ENCODE measurements at regions of chr6 and their contacts with region 1.

Region 1: DNA sequence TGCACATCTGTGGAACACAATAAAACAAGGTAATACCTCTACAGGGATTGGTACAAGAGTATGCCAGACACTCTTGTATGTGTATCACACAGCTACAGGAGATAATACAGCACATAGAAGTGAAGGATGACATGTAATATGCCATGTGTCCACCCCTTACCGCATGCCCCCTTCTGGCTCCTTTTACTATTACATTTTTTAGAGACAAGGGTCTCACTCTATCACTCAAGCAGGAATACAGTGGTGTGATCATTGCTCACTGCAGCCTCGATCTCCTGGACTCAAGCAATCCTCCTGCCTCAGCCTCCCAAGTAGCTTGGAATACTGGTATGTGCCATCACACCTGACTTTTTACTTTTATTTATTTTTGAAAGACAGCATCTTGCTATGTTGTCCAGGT is 4.2 kb upstream of the NCR3 start:
- DNase-seq: peak; percentile 63
- H3K4me3 Mint-ChIP-seq: no peak overlapping the region
- H3K27ac Mint-ChIP-seq: peak overlapping the region; percentile 12
- H3K4me1 Mint-ChIP-seq: peaks cover 65% of the 10 kb centered on the region
- H3K27me3 Mint-ChIP-seq: no peaks in the 10 kb centered on the region

Region 2: DNA sequence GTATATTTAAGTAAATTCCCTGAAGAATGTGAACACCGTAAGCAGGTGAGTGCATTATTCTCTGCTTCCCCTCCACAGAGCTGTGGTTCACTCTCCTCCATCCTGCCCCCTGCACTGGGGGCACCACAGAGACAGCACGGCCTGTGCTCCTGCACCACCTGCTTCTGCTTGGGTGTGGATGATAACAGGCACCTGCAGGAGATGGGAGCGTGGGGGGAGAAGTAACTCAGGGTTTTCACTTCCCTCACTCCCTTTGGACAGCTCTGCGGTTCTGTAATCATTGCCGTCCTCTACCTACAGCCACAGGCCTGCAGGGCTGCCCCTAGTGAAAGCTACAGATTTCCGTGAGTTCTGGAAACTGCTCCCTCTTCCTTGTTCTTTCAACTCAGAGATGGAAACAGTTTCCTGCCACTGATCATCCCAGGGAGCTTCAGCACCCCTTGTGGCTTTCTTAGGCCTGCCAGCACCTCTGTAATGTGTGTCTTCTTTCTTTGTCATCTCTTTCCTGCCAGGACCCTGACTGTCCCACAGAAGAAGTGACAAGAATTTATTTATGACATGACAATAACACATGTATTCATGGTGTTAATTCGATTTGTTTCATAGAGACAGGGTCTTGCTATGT is 120.4 kb before region 1 on chr6:
- CTCF ChIA-PET with region 1: no interaction called
- DNase-seq: no peak
- H3K4me3 Mint-ChIP-seq: no peak overlapping the region
- H3K27ac Mint-ChIP-seq: no peak overlapping the region
- H3K4me1 Mint-ChIP-seq: peaks cover 8% of the 10 kb centered on the region
- H3K27me3 Mint-ChIP-seq: peaks cover 3% of the 10 kb centered on the region

Region 3: DNA sequence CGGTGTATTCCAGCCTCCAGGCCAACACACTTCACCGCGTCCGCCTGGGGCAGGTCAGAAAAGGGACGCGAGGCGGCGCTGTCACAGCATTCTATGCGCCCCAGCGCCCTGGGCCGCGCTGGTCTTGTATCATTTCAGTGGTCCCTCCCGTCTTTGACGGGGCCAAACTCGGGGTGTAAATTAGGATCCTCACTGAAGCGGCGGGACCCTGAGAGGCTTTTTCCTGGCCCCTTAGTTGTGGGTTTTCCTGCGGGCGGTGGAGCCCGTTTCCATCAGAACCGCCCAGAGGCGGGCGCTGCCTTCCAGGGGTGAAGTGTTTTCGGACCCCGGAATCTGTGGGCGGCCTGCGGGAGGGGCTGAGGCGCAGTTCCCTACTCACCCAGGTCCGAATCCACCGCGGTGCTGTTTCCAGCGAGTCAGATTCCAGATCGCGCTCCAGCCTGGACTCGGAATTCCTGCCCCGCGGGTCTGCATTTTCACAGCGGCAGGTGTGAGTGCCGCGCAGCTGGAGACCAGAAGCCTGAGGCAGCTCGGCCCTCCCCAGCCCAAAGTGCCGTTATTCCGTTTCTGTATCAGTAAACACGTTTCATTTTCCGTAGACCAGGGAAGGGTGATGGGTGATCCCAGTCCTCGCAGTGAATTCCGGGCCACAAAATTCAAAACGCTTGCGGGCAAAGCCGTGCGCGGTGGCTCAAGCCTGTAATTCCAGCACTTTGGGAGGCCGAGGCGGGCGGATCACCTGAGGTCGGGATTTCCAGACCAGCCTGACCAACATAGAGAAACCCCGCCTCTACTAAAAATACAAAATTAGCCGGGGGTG is 102.9 kb before region 1 on chr6:
- CTCF ChIA-PET with region 1: interaction called, 11 read pairs
- DNase-seq: peak; percentile 86
- H3K4me3 Mint-ChIP-seq: peak overlapping the region; percentile 81
- H3K27ac Mint-ChIP-seq: peak overlapping the region; percentile 81
- H3K4me1 Mint-ChIP-seq: peaks cover 73% of the 10 kb centered on the region
- H3K27me3 Mint-ChIP-seq: no peaks in the 10 kb centered on the region

Region 4: DNA sequence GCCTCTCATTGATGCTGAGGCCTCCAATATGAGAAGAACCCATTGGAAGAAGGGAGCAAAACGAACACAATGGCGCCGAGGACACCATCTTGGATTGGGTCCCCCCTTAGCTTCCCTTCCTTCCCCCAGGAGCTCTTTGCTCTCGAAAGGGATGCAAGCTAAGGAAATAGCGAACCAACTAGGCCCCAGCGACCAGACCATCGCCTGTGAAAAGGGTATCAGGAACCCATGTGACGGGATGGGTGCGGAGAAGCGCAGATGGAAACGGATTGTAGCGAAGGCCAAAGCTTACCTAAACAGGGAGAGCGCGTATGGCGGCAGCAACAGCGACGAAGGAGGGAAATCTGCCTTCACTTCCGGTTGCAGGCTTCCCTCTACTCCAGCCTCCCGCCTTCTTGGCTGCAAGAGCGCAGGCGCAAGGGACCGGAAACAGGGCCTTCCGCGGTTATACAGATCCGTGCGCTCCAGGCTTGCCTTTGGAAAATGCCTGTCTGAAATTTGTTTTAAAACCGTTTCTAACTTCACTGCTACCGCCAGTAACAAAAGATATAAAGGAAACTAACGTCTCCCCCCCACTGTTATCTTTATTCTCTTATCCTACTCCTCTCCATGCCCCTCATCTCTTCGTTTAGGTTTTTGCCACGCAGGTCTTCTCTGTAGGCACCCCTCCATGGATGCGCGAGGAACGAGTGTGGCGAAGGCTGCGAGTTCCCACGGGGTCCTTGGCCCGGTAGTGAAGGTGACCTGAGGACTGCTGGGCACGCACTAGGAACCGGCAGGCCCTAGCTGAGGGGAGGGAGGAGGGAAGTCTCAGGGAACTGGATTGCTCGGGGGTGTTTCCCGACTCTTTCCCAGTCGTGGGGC is 55.1 kb before region 1 on chr6 and contains the start of gene DDX39B:
- CTCF ChIA-PET with region 1: interaction called, 1,087 read pairs
- DNase-seq: peak; percentile 95
- H3K4me3 Mint-ChIP-seq: peak within 1 kb of the TSS; percentile 99
- H3K27ac Mint-ChIP-seq: peak within 1 kb of the TSS; percentile 98
- H3K4me1 Mint-ChIP-seq: peaks cover 68% of the 10 kb centered on the region
- H3K27me3 Mint-ChIP-seq: no peaks in the 10 kb centered on the region

Region 5: GRCh38 chr6:31580807-31581433 is 16.1 kb before region 1 on chr6:
- CTCF ChIA-PET with region 1: interaction called, 780 read pairs
- DNase-seq: peak; percentile 90
- H3K4me3 Mint-ChIP-seq: peak overlapping the region; percentile 93
- H3K27ac Mint-ChIP-seq: peak overlapping the region; percentile 97
- H3K4me1 Mint-ChIP-seq: peaks cover 70% of the 10 kb centered on the region
- H3K27me3 Mint-ChIP-seq: no peaks in the 10 kb centered on the region

Region 6: DNA sequence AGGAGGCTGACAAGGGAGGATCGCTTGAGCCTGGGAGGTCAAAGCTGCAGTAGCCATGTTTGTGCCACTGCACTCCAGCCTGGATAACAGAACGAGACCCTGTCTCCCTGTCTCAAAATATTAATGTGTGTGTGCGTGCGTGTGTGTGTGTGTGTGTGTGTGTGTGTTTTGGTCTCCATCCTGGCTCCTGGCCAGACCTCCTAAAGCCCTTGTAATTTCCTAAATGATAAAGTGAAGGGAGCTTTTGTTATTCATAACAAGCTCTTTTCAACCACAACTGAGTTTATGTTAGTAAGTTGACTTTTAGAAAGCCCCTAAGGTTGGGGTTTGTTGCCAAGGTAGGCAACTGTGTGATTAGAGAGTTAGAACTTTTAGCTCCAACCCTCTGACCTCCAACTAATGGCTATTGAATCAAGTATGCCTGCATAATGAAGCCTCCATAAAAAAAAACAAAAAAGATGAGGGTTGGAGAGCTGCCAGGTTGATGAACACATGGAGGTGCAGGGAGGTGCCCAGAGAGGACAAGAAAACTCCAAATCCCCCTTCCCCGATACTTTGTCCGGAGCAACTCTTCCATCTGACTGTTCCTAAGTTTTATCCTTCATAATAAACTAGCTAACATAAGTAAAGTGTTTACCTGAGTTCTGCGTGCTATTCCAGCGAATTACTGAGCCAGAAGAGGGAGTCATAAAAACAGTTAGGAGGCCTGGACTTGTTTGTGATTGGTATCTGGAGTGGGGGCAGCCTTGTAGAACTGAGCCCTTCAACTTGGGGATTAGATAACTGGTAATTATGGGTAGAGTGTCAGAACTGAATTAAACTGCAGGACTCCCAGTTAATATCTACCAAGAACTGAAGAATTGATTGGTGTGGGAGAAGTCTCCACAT is 12.8 kb after region 1 on chr6:
- CTCF ChIA-PET with region 1: interaction called, 27 read pairs
- DNase-seq: no peak
- H3K4me3 Mint-ChIP-seq: no peak overlapping the region
- H3K27ac Mint-ChIP-seq: no peak overlapping the region
- H3K4me1 Mint-ChIP-seq: peaks cover 10% of the 10 kb centered on the region
- H3K27me3 Mint-ChIP-seq: peaks cover 7% of the 10 kb centered on the region

Region 7: GRCh38 chr6:31614684-31615578 is 17.9 kb after region 1 on chr6 and contains the start of gene AIF1:
- CTCF ChIA-PET with region 1: interaction called, 27 read pairs
- DNase-seq: no peak
- H3K4me3 Mint-ChIP-seq: peak within 1 kb of the TSS; percentile 76
- H3K27ac Mint-ChIP-seq: peak within 1 kb of the TSS; percentile 85
- H3K4me1 Mint-ChIP-seq: peaks cover 41% of the 10 kb centered on the region
- H3K27me3 Mint-ChIP-seq: peaks cover 7% of the 10 kb centered on the region